Panc1 (cell line): ENCODE measurements at regions of chr16 and their contacts with region 1.

Region 1: GRCh38 chr16:81595604-81596292 is 151.1 kb downstream of the CMIP start:
- DNase-seq: no peak
- ATAC-seq: no peak
- H3K4me3 ChIP-seq: no peak overlapping the region
- H3K27ac ChIP-seq: no peak overlapping the region
- H3K4me1 ChIP-seq: peaks cover 22% of the 10 kb centered on the region
- H3K27me3 ChIP-seq: no peaks in the 10 kb centered on the region
- CTCF ChIP-seq: no peak

Region 2: DNA sequence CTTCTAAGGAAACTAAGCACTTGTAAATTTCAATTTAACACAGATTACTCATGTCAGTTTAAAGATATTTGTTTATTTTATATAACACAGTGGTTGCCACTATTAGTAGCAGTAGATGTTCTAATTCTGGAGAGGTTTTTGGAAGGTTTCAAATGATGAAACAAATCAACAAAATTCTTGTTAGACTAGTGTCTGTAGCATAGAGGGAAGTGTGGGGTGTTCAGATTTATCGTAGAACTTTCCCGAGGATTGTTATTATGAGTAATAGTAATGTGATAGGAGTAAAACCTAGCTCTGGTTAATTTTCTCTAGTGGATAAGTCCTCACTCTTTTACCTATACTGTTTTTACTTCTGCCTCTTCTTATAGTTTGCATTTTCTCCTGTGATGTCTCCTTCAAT is 274.7 kb before region 1 on chr16:
- CTCF ChIA-PET with region 1: no interaction called
- POLR2A ChIA-PET with region 1: interaction called, 16 read pairs
- in situ Hi-C with region 1: no loop called
- intact Hi-C with region 1: no loop called
- DNase-seq: no peak
- ATAC-seq: no peak
- H3K4me3 ChIP-seq: no peak overlapping the region
- H3K27ac ChIP-seq: no peak overlapping the region; the same call in 1 of the 2 replicates
- H3K4me1 ChIP-seq: peaks cover 11% of the 10 kb centered on the region
- H3K27me3 ChIP-seq: no peaks in the 10 kb centered on the region
- CTCF ChIP-seq: no peak

Region 3: DNA sequence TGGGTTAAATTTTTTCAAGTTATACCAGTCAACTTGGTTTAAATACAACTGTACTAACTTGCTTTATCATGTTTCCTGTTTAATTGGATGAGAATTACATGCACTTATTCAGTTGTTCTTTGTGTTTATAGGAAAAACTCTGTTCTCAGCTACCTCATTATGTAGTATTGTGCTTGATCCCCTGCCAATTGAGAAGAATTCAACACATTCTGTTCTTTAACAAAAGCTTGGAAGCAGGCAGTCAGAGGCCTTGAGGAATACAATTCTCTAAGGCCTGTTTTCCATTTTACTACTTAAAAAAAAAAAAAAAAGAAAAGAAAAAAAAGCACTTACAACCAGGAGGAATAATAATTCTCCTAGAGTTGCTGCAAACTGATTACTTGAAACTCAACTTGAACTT is 211.7 kb before region 1 on chr16:
- CTCF ChIA-PET with region 1: no interaction called
- POLR2A ChIA-PET with region 1: no interaction called
- in situ Hi-C with region 1: no loop called
- intact Hi-C with region 1: no loop called
- DNase-seq: no peak
- ATAC-seq: no peak
- H3K4me3 ChIP-seq: no peak overlapping the region
- H3K27ac ChIP-seq: no peak overlapping the region
- H3K4me1 ChIP-seq: no peaks in the 10 kb centered on the region
- H3K27me3 ChIP-seq: no peaks in the 10 kb centered on the region
- CTCF ChIP-seq: no peak

Region 4: GRCh38 chr16:81469710-81470535 is 125.8 kb before region 1 on chr16:
- CTCF ChIA-PET with region 1: no interaction called
- POLR2A ChIA-PET with region 1: no interaction called
- in situ Hi-C with region 1: no loop called
- intact Hi-C with region 1: no loop called
- DNase-seq: no peak
- ATAC-seq: no peak
- H3K4me3 ChIP-seq: no peak overlapping the region
- H3K27ac ChIP-seq: no peak overlapping the region
- H3K4me1 ChIP-seq: peaks cover 6% of the 10 kb centered on the region; the same call in 1 of the 2 replicates
- H3K27me3 ChIP-seq: no peaks in the 10 kb centered on the region
- CTCF ChIP-seq: no peak

Region 5: DNA sequence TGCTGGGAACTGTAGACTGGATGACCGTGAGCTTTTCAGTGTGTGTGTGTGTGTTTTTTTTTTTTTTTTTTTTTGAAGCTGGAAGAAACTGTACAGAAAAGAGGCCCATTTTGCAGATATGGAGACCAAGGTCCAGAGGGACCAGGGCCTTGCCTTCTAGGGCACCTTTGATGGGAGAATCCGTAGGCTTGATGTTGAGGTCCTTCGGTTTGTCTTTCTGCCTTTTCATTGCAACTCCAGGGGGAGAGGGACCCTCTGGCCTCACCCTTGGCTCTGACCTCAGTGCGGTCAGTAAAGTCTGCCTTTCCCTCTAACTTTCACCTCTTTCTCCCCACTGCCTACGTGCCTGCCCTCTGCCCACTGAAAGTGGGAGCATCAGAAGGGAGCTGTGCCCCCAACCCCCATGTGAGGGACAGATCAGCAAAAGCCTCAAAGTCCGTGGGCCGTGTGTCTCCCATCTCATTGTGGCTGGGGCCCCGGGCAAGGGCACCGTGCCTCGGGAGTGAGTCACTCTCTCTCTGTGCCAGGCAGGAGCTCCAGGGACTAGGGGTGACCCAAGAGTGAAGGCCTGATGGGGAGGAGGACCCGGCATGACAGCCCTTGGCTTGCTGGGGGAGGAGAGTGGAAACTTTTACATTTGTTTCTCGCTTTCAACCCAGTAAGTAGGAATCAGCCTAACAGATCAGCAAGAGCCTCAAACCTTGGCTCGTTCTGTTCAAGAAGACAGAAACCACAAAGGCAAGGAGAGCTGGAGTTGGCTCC is 27.6 kb before region 1 on chr16:
- CTCF ChIA-PET with region 1: no interaction called
- POLR2A ChIA-PET with region 1: no interaction called
- in situ Hi-C with region 1: no loop called
- intact Hi-C with region 1: no loop called
- DNase-seq: no peak
- ATAC-seq: peak; percentile 90
- H3K4me3 ChIP-seq: no peak overlapping the region; a peak in 1 of 4 replicates
- H3K27ac ChIP-seq: peak overlapping the region; percentile 86
- H3K4me1 ChIP-seq: peaks cover 40% of the 10 kb centered on the region
- H3K27me3 ChIP-seq: no peaks in the 10 kb centered on the region
- CTCF ChIP-seq: no peak